Activated naive CD4-positive, alpha-beta T cell treated with anti-CD3 and anti-CD28 coated beads for 36 hours (primary cell): ENCODE measurements at regions of chr13 and their contacts with region 1.

Region 1: GRCh38 chr13:98653463-98653985 is 76.6 kb upstream of the STK24 start:
- DNase-seq: peak; percentile 89
- H3K4me3 Mint-ChIP-seq: peak overlapping the region; percentile 32
- H3K27ac Mint-ChIP-seq: peak overlapping the region; percentile 54
- H3K4me1 Mint-ChIP-seq: peaks cover 2% of the 10 kb centered on the region
- H3K27me3 Mint-ChIP-seq: no peaks in the 10 kb centered on the region

Region 2: GRCh38 chr13:98445340-98446233 is 207.9 kb before region 1 on chr13:
- CTCF ChIA-PET with region 1: interaction called, 160 read pairs
- intact Hi-C with region 1: loop called (anchors 1 kb)
- DNase-seq: peak; percentile 85
- H3K4me3 Mint-ChIP-seq: no peak overlapping the region
- H3K27ac Mint-ChIP-seq: peak overlapping the region; percentile 88
- H3K4me1 Mint-ChIP-seq: peaks cover 17% of the 10 kb centered on the region
- H3K27me3 Mint-ChIP-seq: no peaks in the 10 kb centered on the region

Region 3: GRCh38 chr13:98476538-98476966 is 177.0 kb before region 1 on chr13:
- CTCF ChIA-PET with region 1: interaction called, 15 read pairs
- intact Hi-C with region 1: loop called (anchors 2 kb)
- DNase-seq: peak; percentile 95
- H3K4me3 Mint-ChIP-seq: peak overlapping the region; percentile 71
- H3K27ac Mint-ChIP-seq: peak overlapping the region; percentile 92
- H3K4me1 Mint-ChIP-seq: peaks cover 64% of the 10 kb centered on the region
- H3K27me3 Mint-ChIP-seq: no peaks in the 10 kb centered on the region

Region 4: DNA sequence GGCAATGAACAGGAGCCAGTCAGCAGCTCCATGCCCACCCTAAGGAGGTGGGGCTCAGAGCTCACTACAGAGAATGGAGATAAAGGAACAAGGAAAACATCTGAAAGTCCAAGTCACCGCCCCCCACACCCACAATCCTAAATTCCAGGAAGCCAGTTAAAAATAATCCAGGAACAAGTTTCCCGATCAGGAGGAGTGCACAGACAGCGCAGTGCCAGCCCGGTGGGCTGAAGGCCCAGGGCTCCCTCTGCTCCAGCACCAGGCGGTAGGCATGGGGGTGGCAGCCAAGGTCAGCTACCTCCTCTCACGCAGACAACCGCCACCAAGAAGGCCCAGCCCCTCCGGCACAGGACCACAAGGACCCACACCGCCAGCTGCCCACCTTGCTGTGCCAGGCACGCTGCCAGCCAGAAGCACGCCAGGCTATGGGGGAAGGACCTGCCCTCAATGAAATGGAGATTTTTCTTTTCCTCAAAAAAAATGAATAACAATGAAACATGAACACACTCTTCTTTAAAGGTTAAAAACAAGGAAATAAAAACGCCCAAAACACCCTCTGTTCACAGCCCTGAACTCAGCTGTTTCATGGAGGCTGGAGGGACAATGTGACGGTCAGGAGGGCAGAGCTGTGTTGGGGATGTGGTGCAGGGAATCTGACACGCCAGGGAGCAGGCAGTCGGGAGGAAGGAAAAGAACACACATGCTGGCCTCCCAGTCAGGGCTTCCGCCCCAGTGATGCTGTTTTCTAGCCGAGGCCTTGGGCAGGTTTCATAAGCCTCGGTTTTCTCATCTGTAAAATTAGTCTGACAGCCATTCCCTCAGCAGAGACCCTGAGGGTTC is 87.6 kb before region 1 on chr13:
- CTCF ChIA-PET with region 1: interaction called, 10 read pairs
- intact Hi-C with region 1: loop called (anchors 5 kb)
- DNase-seq: peak; percentile 38
- H3K4me3 Mint-ChIP-seq: peak overlapping the region; percentile 53
- H3K27ac Mint-ChIP-seq: peak overlapping the region; percentile 88
- H3K4me1 Mint-ChIP-seq: peaks cover 92% of the 10 kb centered on the region
- H3K27me3 Mint-ChIP-seq: no peaks in the 10 kb centered on the region

Region 5: GRCh38 chr13:98664039-98664438 is 10.5 kb after region 1 on chr13:
- CTCF ChIA-PET with region 1: interaction called, 22 read pairs
- intact Hi-C with region 1: loop called (anchors 1 kb)
- DNase-seq: peak; percentile 85
- H3K4me3 Mint-ChIP-seq: no peak overlapping the region
- H3K27ac Mint-ChIP-seq: peak overlapping the region; percentile 44
- H3K4me1 Mint-ChIP-seq: peaks cover 19% of the 10 kb centered on the region
- H3K27me3 Mint-ChIP-seq: no peaks in the 10 kb centered on the region

Region 6: DNA sequence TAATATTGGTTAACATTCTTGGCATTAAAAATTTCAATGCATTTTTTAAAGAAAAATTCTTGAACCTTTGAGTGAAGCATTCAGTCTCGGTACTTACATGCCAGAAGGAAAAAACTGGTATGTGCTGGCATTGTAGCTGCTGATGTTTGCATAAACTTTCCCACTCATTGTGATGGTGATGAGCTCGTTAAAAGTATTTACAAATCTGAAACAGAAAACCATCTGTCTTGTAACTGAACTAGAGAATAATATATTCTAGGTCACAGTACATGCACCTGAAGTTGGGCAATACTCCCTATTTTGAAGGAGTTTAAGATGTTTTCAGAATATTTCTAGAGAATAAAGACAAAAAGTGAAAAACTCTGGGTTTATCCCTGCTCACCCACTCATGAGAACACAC is 34.8 kb after region 1 on chr13:
- CTCF ChIA-PET with region 1: no interaction called
- intact Hi-C with region 1: no loop called
- DNase-seq: no peak
- H3K4me3 Mint-ChIP-seq: no peak overlapping the region
- H3K27ac Mint-ChIP-seq: no peak overlapping the region
- H3K4me1 Mint-ChIP-seq: no peaks in the 10 kb centered on the region
- H3K27me3 Mint-ChIP-seq: no peaks in the 10 kb centered on the region